Dorsolateral prefrontal cortex (tissue), 120 donors: ENCODE measurements at regions of chr7 and their contacts with region 1.

Region 1: GRCh38 chr7:82017334-82017943 is 247.6 kb upstream of the HGF start:
- DNase-seq: no peak
- H3K4me3 ChIP-seq: no peak overlapping the region
- H3K27ac ChIP-seq: peak overlapping the region in 4 of 59 donors; percentile 2 to 20 (median 18)
- H3K27me3 ChIP-seq: no peaks in the 10 kb centered on the region
- CTCF ChIP-seq: peak in 55 of 56 donors; percentile 50 to 88 (median 68)

Region 2: GRCh38 chr7:81482600-81483186 is 534.7 kb before region 1 on chr7:
- intact Hi-C with region 1: loop called in 1 of 2 experiments (anchors 5 kb)
- DNase-seq: no peak
- H3K4me3 ChIP-seq: no peak overlapping the region
- H3K27ac ChIP-seq: no peak overlapping the region
- H3K27me3 ChIP-seq: no peaks in the 10 kb centered on the region
- CTCF ChIP-seq: peak; percentile 60 to 92 (median 78)

Region 3: DNA sequence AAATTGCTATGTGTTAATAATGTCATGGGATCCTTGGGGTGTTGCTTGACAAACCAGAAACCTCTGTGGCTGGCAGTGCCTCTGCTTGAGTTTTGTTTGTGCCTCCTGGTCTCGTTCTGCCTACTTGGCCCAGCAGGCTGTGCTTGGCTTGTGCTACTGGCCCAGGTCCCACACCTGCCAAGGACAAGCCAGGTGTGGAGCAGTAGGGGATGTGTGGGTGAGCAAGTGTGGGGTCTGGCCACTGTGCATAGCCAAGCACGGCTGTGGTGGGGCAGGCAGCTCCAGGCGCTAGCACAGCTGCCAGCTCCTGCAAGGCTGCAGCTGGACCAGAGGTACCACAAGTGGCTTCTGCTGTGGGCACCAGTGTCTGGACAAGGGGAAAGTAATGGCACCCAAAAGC is 97.9 kb before region 1 on chr7:
- intact Hi-C with region 1: no loop called
- DNase-seq: no peak
- H3K4me3 ChIP-seq: no peak overlapping the region
- H3K27ac ChIP-seq: no peak overlapping the region
- H3K27me3 ChIP-seq: no peaks in the 10 kb centered on the region
- CTCF ChIP-seq: no peak

Region 4: DNA sequence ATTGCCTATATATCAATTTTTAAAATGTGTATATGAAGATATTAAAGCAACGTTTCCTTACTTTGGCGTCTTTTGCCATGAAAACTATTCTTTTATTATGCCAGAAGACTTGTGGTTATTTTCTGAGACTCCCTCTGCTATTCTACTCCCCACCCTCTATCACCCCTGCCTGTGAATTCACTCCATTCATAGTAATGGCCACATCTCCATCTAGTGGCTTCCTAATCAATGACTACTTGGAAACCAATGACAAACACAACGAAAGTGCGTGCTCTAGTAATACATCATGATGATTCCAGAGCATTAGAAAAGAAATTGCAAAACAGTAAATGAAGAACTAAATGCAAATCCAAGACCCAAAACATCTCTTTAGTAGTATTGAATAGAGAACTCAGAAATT is 60.9 kb before region 1 on chr7:
- intact Hi-C with region 1: loop called in 1 of 2 experiments (anchors 10 kb)
- DNase-seq: no peak
- H3K4me3 ChIP-seq: no peak overlapping the region
- H3K27ac ChIP-seq: no peak overlapping the region
- H3K27me3 ChIP-seq: no peaks in the 10 kb centered on the region
- CTCF ChIP-seq: peak in 54 of 56 donors; percentile 11 to 78 (median 54)

Region 5: DNA sequence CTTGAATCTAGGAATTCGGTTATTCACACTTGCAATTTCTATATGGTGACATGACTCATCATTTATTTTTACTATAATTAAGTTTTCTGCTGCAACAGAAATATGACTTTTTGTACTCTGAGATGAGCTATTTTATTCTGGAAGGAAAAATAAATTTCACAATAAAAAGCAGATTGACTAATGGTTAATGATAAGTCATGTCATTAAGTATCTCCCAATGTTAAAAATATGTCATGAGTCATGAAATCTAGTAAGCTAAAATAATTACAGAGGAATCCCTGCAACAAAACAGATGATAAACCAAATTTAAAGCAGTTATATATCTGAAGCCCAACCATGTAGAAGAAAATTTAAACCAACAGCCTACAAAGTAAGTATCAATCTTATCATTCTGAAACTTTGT is 276.9 kb after region 1 on chr7:
- intact Hi-C with region 1: no loop called
- DNase-seq: no peak
- H3K4me3 ChIP-seq: no peak overlapping the region
- H3K27ac ChIP-seq: no peak overlapping the region
- H3K27me3 ChIP-seq: no peaks in the 10 kb centered on the region
- CTCF ChIP-seq: no peak